Activated T-helper 2 cell treated with anti-CD3 and anti-CD28 coated beads, Interferon-gamma antibody, Interleukin-2, Interleukin-4, amounts not matched to agents 10 μg/mL and 5 μg/mL and 100 μg/mL, durations not matched to agents 14 hours and 24 hours and 36 hours (primary cell): ENCODE measurements at regions of chr1 and their contacts with region 1.

Region 1: DNA sequence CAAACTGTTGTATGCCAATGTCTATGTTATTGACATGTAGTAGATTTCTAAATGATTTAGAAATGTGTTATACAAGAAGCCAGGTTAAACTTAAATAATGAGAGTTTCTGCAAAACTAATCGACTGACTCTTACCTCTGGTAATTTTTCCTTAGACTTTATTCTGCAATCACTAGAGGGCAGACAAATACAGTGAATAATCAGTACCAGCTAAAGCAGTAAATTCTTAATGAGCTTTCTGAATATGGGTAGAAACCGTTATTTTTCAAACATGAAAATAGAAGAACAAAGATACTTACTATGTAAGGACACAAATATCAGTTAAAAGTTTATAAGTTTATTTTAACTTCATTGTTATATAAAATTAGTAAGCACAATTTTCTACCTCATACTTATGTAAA is 97.9 kb upstream of the RGS1 start:
- DNase-seq: no peak
- H3K4me3 Mint-ChIP-seq: no peak overlapping the region
- H3K27ac Mint-ChIP-seq: no peak overlapping the region
- H3K4me1 Mint-ChIP-seq: peaks cover 3% of the 10 kb centered on the region
- H3K27me3 Mint-ChIP-seq: peaks cover 12% of the 10 kb centered on the region

Region 2: DNA sequence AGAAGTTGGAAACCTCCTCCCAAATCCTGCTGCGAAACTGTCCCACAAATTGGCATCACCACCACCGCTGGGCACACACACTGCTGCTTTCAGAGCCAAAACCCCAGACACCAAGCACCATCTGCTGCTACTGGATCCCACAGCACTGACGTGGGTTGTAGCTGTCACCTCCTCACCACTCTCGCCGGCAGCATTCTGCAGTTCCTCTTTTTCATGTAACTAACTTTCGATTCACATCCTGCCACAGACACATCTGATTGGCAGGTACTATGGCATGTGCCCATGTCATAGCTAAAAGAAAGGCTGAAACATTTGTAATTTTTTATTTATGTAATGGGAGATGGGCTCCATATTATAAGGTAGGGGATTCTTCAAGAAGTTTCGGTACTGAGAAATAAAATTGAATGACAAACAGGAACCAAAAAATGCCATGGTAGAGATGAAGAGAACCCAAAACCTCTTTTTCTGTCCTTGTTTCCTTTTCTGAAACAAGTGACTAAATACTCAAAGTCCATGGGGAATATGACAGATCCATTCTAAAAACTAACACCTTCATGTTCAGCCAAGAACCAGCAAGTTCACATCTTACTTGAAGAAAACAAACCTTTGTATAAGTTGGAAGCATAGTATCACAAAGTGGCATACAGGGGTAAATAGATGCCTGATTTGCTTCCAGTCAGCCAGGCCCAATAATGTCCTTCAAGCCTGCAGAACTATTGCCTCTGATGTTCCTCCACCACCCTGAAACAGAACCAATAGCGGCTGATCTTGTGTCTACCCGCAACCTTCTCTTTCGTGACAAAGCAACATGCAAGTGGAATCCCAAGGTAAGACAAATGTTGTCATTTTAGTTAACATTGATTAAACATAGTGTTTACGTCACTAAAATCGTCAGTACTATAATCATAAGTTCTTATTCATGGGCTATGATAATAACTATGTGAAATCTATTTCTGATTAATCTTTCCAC is 131.8 kb after region 1 on chr1:
- intact Hi-C with region 1: loop called (anchors 1 kb)
- DNase-seq: peak; percentile 46
- H3K4me3 Mint-ChIP-seq: peak overlapping the region; percentile 22
- H3K27ac Mint-ChIP-seq: no peak overlapping the region
- H3K4me1 Mint-ChIP-seq: peaks cover 12% of the 10 kb centered on the region
- H3K27me3 Mint-ChIP-seq: peaks cover 2% of the 10 kb centered on the region

Region 3: DNA sequence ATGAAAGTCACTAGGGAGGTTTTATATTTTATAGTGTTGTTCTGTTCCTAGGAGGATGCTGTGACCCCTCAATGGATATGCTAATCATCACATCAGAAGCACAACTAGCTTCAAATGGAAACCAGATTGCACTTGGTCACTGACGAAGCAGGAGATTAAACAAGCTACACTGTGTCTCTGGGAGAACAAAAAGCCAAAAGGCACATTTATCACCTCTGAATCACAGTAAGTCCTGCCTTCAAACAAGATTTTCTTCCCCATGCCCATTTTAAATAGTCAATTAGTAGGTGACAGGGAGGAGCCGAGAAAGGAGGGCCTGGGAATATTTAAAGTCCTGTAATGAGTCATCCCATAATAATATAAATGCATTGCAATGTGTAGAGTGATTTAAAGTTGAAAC is 369.3 kb after region 1 on chr1:
- intact Hi-C with region 1: no loop called
- DNase-seq: no peak
- H3K4me3 Mint-ChIP-seq: no peak overlapping the region
- H3K27ac Mint-ChIP-seq: no peak overlapping the region
- H3K4me1 Mint-ChIP-seq: no peaks in the 10 kb centered on the region
- H3K27me3 Mint-ChIP-seq: peaks cover 28% of the 10 kb centered on the region

Region 4: GRCh38 chr1:193019442-193020026 is 541.9 kb after region 1 on chr1:
- intact Hi-C with region 1: loop called (anchors 1 kb)
- DNase-seq: no peak
- H3K4me3 Mint-ChIP-seq: no peak overlapping the region
- H3K27ac Mint-ChIP-seq: no peak overlapping the region
- H3K4me1 Mint-ChIP-seq: no peaks in the 10 kb centered on the region
- H3K27me3 Mint-ChIP-seq: no peaks in the 10 kb centered on the region

Region 5: DNA sequence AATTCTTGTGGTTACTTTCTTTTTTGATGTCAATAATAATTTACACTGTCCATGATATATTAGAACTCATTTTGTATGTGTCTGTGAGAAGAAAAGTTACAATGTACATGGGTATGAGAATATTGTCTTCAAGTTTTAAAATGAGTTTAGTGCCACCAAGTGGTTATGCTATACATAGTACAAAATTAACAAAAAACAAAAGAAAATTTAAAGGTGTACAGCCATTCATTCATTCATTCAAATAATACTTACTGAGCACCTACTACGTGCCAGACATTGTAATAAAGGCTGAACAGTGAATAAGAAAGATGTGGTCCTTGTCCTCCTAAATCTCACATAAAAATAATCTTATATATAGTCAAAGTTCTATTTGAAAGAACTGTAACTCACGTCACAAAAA is 553.8 kb after region 1 on chr1:
- intact Hi-C with region 1: loop called (anchors 5 kb)
- DNase-seq: no peak
- H3K4me3 Mint-ChIP-seq: no peak overlapping the region
- H3K27ac Mint-ChIP-seq: no peak overlapping the region
- H3K4me1 Mint-ChIP-seq: peaks cover 17% of the 10 kb centered on the region
- H3K27me3 Mint-ChIP-seq: no peaks in the 10 kb centered on the region